ENCODE measurements at regions of chr16 and their contacts with region 1.

Region 1: GRCh38 chr16:27245276-27246172 is 23.0 kb downstream of the NSMCE1 start:
- DNase-seq: peak in 1 of 4 donors; percentile 49
- ATAC-seq: peak; percentile 57
- H3K4me3 ChIP-seq: no peak overlapping the region
- H3K27ac ChIP-seq: peak overlapping the region in 1 of 4 donors; percentile 32
- H3K4me1 ChIP-seq: peaks cover 20% of the 10 kb centered on the region
- H3K27me3 ChIP-seq: no peaks in the 10 kb centered on the region
- CTCF ChIP-seq: no peak
- POLR2A ChIP-seq: no peak

Region 2: GRCh38 chr16:26365161-26365940 is 880.2 kb before region 1 on chr16:
- intact Hi-C with region 1: no loop called
- DNase-seq: no peak
- ATAC-seq: no peak
- H3K4me3 ChIP-seq: no peak overlapping the region
- H3K27ac ChIP-seq: no peak overlapping the region
- H3K4me1 ChIP-seq: no peaks in the 10 kb centered on the region
- H3K27me3 ChIP-seq: no peaks in the 10 kb centered on the region
- CTCF ChIP-seq: no peak
- POLR2A ChIP-seq: no peak

Region 3: DNA sequence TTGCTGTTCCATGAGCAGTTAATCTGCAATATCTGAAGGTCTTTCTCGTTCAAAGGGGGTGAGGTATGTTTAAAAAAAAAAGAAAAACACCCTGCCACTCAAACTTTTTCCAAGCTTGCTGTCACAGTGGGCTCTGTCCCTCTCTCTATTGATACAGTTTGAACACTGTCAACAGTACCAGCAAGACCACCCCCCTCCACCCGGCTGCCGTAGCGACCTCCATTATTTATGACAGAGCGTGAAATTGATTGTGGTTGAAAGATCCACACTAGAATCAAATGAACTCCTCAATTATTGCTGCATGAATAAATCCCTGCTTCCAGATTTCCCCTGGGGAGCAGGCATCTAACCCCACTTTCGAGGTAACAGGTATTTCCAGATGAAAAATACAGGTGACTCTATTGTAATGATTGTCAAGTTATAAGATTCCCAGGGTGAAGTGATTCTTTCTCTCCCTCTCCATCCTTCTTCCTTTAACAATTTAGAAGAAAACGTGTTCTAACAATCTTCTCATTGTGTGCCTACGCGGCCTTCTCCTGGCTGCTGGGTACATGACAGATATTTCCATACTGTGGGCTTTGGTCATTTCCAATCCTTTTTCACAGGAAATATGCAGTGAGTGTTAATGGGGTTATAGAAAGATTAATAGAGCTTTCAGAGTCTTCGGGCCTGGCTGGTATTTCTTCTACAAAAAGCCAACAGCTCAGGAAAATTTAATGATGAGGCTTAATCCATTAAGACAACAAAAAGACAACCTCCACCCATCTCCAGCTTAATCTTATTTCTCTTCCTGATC is 314.5 kb before region 1 on chr16:
- intact Hi-C with region 1: no loop called
- DNase-seq: no peak
- ATAC-seq: no peak
- H3K4me3 ChIP-seq: no peak overlapping the region
- H3K27ac ChIP-seq: no peak overlapping the region
- H3K4me1 ChIP-seq: no peaks in the 10 kb centered on the region
- H3K27me3 ChIP-seq: no peaks in the 10 kb centered on the region
- CTCF ChIP-seq: no peak
- POLR2A ChIP-seq: no peak

Region 4: DNA sequence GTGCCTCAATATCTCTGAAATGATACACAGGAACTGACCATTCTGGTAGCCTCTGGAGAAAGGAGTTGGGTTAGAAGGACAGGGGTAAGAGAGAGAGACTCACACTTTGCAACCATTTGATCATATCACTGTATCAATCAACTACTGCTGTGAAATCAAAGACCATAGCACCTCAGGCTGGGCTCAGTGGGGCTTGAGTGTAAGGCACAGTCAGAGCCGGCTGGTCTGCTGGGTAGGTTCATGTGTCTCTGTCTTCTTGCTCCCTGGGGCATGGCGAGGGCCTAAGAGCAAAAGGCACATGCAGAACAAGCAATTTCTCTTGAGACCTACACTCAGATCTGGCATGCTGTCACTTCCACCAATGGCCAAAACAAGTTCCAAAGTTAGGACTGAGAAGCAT is 225.5 kb before region 1 on chr16:
- intact Hi-C with region 1: no loop called
- DNase-seq: no peak
- ATAC-seq: no peak
- H3K4me3 ChIP-seq: no peak overlapping the region
- H3K27ac ChIP-seq: no peak overlapping the region
- H3K4me1 ChIP-seq: no peaks in the 10 kb centered on the region
- H3K27me3 ChIP-seq: no peaks in the 10 kb centered on the region
- CTCF ChIP-seq: no peak
- POLR2A ChIP-seq: no peak

Region 5: GRCh38 chr16:27449434-27450195 is 204.1 kb after region 1 on chr16:
- intact Hi-C with region 1: loop called (anchors 5 kb)
- DNase-seq: peak in 1 of 4 donors; percentile 20
- ATAC-seq: no peak
- H3K4me3 ChIP-seq: no peak overlapping the region
- H3K27ac ChIP-seq: no peak overlapping the region
- H3K4me1 ChIP-seq: no peaks in the 10 kb centered on the region
- H3K27me3 ChIP-seq: no peaks in the 10 kb centered on the region
- CTCF ChIP-seq: no peak
- POLR2A ChIP-seq: no peak